Left lung (tissue), 14 donors: ENCODE measurements at regions of chr5 and their contacts with region 1.

Region 1: GRCh38 chr5:150989695-150990094 is 30.7 kb upstream of the GPX3 start:
- DNase-seq: no peak
- ATAC-seq: no peak
- H3K4me3 ChIP-seq: no peak overlapping the region
- H3K27ac ChIP-seq: no peak overlapping the region
- H3K4me1 ChIP-seq: no peaks in the 10 kb centered on the region
- H3K27me3 ChIP-seq: no peaks in the 10 kb centered on the region
- CTCF ChIP-seq: no peak

Region 2: GRCh38 chr5:150758531-150759333 is 231.0 kb before region 1 on chr5 and contains the start of gene DCTN4:
- intact Hi-C with region 1: no loop called
- DNase-seq: peak; percentile 97 to 99 (median 98)
- ATAC-seq: peak; percentile 92
- H3K4me3 ChIP-seq: peak within 1 kb of the TSS; percentile 50 to 77
- H3K27ac ChIP-seq: peak within 1 kb of the TSS; percentile 95 to 96
- H3K4me1 ChIP-seq: peaks cover 16 to 67% of the 10 kb centered on the region in 2 donors
- H3K27me3 ChIP-seq: no peaks in the 10 kb centered on the region
- CTCF ChIP-seq: no peak
- polyA plus RNA-seq, gene DCTN4: 64.2 to 76.6 (median 69.4) TPM

Region 3: DNA sequence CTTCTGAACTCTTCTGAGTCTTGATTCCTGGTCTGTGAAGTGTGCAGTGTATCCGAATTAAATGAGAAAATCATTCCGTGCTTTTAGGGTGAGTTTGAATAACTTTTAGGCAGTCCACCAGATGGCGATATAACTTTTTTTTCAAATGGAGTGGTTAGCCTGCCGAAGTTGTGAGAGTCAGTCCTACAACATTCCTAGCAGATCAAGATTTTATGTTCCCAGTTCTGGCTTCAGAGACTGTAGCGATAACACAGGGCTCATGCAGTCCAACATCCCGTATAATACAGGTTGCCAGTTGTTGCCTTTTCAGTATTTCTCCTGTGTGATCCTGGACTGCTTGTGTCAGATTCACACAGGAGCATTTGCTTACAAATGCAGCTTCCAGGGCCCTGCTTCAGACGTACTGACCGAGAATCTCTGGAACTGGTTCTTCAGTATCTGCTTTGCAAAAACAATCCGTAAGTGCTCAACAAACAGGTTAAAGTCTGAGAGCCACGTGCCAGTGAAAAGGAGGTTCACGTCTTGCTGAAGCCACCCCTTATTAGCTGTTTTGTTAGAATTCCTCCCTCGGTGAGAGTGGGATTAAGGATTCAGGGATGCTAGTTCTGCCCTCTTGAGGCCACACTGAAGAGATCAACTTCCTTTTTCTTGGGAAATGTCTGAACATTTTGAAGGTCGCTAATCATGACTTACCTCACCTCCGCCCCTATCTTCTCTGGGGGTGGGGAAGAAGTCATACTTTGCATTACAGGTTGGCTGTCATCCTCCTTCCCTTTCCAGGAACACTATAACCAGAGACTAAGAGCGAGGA is 188.4 kb before region 1 on chr5:
- intact Hi-C with region 1: loop called in 1 of 2 experiments (anchors 10 kb)
- DNase-seq: peak in 2 of 4 donors; percentile 75 to 82
- ATAC-seq: peak; percentile 96
- H3K4me3 ChIP-seq: peak overlapping the region; percentile 12 to 28
- H3K27ac ChIP-seq: peak overlapping the region; percentile 21 to 80
- H3K4me1 ChIP-seq: peaks cover 5 to 15% of the 10 kb centered on the region in 2 donors
- H3K27me3 ChIP-seq: no peaks in the 10 kb centered on the region
- CTCF ChIP-seq: peak; percentile 19 to 57

Region 4: DNA sequence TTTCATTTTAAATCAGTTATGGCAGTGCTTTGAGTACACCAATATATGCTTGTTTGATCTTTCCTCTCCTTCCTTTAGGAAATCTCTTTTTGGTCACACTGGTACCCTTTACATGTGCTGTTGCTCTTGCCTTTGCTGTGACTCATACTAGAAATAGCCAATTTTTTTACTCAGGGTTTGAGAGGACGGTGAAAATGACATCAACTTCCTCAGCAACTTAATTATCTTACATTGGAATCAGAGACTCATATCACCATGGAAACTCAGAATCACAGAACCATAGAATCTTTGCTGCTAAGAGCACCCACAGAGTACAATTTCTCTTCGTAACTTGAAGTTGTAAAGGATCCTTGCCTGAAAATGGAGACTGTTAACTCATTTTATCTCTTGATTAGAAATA is 71.1 kb before region 1 on chr5:
- intact Hi-C with region 1: no loop called
- DNase-seq: no peak
- ATAC-seq: no peak
- H3K4me3 ChIP-seq: no peak overlapping the region
- H3K27ac ChIP-seq: no peak overlapping the region
- H3K4me1 ChIP-seq: no peaks in the 10 kb centered on the region
- H3K27me3 ChIP-seq: peaks cover 0 to 2% of the 10 kb centered on the region in 2 donors
- CTCF ChIP-seq: no peak